ENCODE measurements at regions of chrX and their contacts with region 1.

Region 1: DNA sequence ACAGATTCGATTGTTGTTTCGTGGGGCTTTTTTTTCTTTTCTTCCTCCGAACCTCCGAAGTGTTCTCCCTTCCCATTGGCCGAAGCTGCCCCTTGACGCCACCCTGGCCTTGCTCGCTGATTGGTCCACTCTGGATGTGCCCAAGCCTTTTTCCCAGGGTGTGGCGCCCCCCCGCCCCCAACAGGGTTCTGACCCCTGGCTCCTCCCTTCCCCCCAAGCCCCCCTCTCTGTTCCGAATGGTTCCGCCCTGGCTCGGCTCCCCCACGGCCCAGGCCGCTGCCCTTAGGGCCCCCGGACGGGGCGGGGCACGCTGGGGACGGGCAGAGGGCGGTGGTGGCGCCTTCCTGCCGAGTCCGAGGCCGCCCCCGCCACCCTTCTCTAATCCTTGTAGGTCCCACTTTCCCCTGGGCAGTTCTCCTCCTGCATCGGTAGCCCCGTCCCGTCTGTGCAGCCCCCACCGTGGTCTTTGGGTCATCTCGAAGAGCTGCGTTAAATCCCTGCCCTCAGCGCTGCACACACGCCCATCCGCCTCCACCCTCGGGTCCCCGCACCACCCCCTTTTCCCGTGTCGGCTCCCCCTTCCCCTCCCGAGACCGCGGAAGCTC is 25.5 kb downstream of the UTP14A start:
- DNase-seq: peak; percentile 95 to 97
- ATAC-seq: peak; percentile 78 to 91
- H3K4me3 ChIP-seq: peak overlapping the region; percentile 82
- H3K27ac ChIP-seq: peak overlapping the region; percentile 95 to 99
- H3K4me1 ChIP-seq: peaks cover 8% of the 10 kb centered on the region; the same call in 1 of the 3 replicates
- CTCF ChIP-seq: no peak
- EP300 ChIP-seq: no peak
- POLR2A ChIP-seq: peak; percentile 58; the same call in 1 of the 2 replicates
- RAD21 ChIP-seq: no peak

Region 2: GRCh38 chrX:129706400-129707072 is 225.0 kb before region 1 on chrX:
- CTCF ChIA-PET with region 1: no interaction called
- POLR2A ChIA-PET with region 1: no interaction called
- DNase-seq: no peak
- ATAC-seq: no peak
- H3K4me3 ChIP-seq: no peak overlapping the region
- H3K27ac ChIP-seq: no peak overlapping the region
- H3K4me1 ChIP-seq: no peaks in the 10 kb centered on the region
- CTCF ChIP-seq: no peak
- EP300 ChIP-seq: no peak
- POLR2A ChIP-seq: no peak
- RAD21 ChIP-seq: no peak

Region 3: GRCh38 chrX:129982274-129983251 is 51.0 kb after region 1 on chrX and contains the start of gene BCORL1:
- CTCF ChIA-PET with region 1: interaction called, 4 read pairs
- POLR2A ChIA-PET with region 1: interaction called, 14 read pairs
- DNase-seq: peak; percentile 94
- ATAC-seq: peak; percentile 83 to 91
- H3K4me3 ChIP-seq: no peak within 1 kb of the TSS; the same call in 1 of the 3 replicates
- H3K27ac ChIP-seq: peak within 1 kb of the TSS; percentile 51 to 98
- H3K4me1 ChIP-seq: no peaks in the 10 kb centered on the region
- CTCF ChIP-seq: no peak
- EP300 ChIP-seq: no peak
- POLR2A ChIP-seq: peak; percentile 92
- RAD21 ChIP-seq: no peak
- polyA plus RNA-seq, gene BCORL1: 1.4 and 2.3 TPM in 2 replicates

Region 4: GRCh38 chrX:130024127-130024526 is 92.6 kb after region 1 on chrX:
- CTCF ChIA-PET with region 1: interaction called, 56 read pairs
- POLR2A ChIA-PET with region 1: no interaction called
- DNase-seq: peak; percentile 40 to 56
- ATAC-seq: peak; percentile 43 to 89; a peak in 5 of 6 replicates
- H3K4me3 ChIP-seq: no peak overlapping the region
- H3K27ac ChIP-seq: no peak overlapping the region
- H3K4me1 ChIP-seq: no peaks in the 10 kb centered on the region
- CTCF ChIP-seq: no peak
- EP300 ChIP-seq: no peak
- POLR2A ChIP-seq: no peak
- RAD21 ChIP-seq: no peak

Region 5: DNA sequence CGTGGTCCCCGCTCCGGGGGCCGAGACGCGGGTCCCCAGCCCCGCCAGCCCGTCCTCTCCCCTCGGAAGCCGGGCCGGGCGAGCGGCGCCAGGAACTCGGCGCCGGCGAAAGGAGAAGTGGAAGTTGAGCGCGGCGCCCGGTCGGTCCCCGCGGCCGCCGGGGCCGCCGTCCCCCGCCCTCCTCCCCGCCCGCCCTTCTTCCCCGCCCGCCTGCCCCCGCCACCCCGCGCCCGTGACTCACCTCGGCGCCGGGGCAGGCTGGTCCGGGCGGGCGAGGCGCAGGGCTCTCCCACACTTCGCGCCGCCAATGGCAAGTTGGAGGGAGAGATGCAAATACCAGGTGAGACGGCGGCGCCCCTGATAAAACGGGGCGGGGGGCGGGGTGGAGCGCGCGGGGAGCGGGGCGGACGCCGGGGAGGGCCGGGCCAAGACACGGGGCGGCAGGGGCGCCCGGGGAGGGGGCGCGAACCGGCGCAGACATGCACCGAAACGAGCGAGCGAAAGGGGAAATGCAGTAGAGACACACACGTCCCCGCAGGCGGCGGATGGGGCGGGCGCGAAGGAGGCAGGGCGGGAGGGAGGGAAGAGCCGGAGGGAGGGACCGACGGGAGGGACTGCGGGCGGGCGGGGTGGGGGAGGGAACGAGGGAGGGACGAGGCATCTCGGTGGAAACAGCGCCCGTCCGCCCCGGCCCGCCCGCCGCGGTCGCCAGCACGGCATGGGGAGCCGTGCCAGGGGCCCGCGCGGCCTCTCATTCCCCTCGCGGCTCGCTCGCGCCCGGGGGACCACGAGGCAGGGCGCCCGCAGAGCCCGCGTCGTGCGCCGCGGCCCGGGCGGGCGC is 179.1 kb after region 1 on chrX and contains the start of gene ELF4:
- CTCF ChIA-PET with region 1: no interaction called
- POLR2A ChIA-PET with region 1: interaction called, 11 read pairs
- DNase-seq: peak; percentile 65 to 70
- ATAC-seq: peak; percentile 51 to 71
- H3K4me3 ChIP-seq: peak within 1 kb of the TSS; percentile 98
- H3K27ac ChIP-seq: peak within 1 kb of the TSS; percentile 85 to 98
- H3K4me1 ChIP-seq: peaks cover 41% of the 10 kb centered on the region
- CTCF ChIP-seq: 0 out of 3 replicates have a peak, but pooled peaks have one; percentile 16
- EP300 ChIP-seq: no peak
- POLR2A ChIP-seq: peak; percentile 14; the same call in 1 of the 2 replicates
- RAD21 ChIP-seq: no peak
- polyA plus RNA-seq, gene ELF4: 18.0 and 18.4 TPM in 2 replicates